ENCODE measurements at regions of chr9 and their contacts with region 1.

Region 1: DNA sequence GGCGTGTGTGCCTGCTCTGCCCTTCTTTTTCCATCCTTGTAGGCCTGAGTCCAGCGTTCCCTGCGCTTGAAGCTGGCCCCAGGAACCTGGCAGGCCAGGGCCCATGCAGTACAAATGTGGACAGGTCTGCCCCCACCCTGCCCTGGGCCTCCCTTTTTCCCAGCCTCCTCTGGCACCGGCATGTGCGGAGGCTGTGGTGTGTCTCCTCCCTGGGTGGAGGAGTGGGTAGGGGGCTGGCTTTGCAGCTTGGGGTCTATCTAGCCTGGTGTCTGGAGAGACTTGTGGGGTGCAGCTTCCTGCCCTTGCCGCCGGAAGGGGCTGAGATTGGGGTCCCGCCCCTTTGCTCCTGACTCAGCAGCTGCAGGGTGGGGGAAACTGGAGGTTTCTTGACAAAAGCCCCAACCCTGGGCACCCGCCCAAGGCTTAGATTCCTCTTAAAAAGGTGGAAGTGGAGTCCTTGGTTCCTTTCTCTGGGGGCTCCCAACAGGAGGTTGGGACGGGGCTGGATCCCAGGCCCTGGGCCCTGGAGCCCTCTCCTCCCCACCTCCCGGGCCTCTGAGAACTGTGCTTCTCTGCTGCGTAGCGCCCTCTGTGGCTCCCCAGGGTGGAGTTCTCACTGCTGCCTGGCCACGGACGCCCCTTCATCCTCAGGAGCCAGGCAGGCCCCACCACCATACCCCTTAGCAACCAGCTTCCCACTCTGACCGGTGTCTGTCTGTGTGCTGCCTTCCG is 18.0 kb downstream of the RXRA start:
- DNase-seq: no peak
- H3K4me3 ChIP-seq: no peak overlapping the region
- H3K27ac ChIP-seq: no peak overlapping the region
- H3K4me1 ChIP-seq: no peaks in the 10 kb centered on the region; a peak in 1 of 7 replicates
- H3K27me3 ChIP-seq: no peaks in the 10 kb centered on the region
- CTCF ChIP-seq: peak in 2 of 3 experiments; percentile 37 to 51; a peak in 2 of 4 replicates
- EP300 ChIP-seq: no peak
- POLR2A ChIP-seq: no peak
- RAD21 ChIP-seq: peak; percentile 14 to 44; a peak in 3 of 4 replicates

Region 2: GRCh38 chr9:134326724-134327601 is 17.3 kb before region 1 on chr9:
- CTCF ChIA-PET with region 1: interaction called, 17 read pairs
- POLR2A ChIA-PET with region 1: interaction called, 3 read pairs
- DNase-seq: no peak
- H3K4me3 ChIP-seq: peak overlapping the region; percentile 63 to 81 (median 70)
- H3K27ac ChIP-seq: no peak overlapping the region
- H3K4me1 ChIP-seq: peaks cover 0 to 41% (median 23%) of the 10 kb centered on the region in 4 experiments; a peak in 6 of 7 replicates
- H3K27me3 ChIP-seq: peaks cover 0 to 6% (median 2%) of the 10 kb centered on the region in 4 experiments; a peak in 2 of 7 replicates
- CTCF ChIP-seq: no peak
- EP300 ChIP-seq: no peak
- POLR2A ChIP-seq: no peak
- RAD21 ChIP-seq: no peak

Region 3: GRCh38 chr9:134356570-134357504 is 12.6 kb after region 1 on chr9:
- CTCF ChIA-PET with region 1: interaction called, 15 read pairs
- POLR2A ChIA-PET with region 1: no interaction called
- DNase-seq: no peak
- H3K4me3 ChIP-seq: no peak overlapping the region
- H3K27ac ChIP-seq: no peak overlapping the region; the same call in 1 of the 2 replicates
- H3K4me1 ChIP-seq: no peaks in the 10 kb centered on the region; a peak in 1 of 7 replicates
- H3K27me3 ChIP-seq: no peaks in the 10 kb centered on the region
- CTCF ChIP-seq: no peak
- EP300 ChIP-seq: no peak
- POLR2A ChIP-seq: no peak
- RAD21 ChIP-seq: no peak

Region 4: DNA sequence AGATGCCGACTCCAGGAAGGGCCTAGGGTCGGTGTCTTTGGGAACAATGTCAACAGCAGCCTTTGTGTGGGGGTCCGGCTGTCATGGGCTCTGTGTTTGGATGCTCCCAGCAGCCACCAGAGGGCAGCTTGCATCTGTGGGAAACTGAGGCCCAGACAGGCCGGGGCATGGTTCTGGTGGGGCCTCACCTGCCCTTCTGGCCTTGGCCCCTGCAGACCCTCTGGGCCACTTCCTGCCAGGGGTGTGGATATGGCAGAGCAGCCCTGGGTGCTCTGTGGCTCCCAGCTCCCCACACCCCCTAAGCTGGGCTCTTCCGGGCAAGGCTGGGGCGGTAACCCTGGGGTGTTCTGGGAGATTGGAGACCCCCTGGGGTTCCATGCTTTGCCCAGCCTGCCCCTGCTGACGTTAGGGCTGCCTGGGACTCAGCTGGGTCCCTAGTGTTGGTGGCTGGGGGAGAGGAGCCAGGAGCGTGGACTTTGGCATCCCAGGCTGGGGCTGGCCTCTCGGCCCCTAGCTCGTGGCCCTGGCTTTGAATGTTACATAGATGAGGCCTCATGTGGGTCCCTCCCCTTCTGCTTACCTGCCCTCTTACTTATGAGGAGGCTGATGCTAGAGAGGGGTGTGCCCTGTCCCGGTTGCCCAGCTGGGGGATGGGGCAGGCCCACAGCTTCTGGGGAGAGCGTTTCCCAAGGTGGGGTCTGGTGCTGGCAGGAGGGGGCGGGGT is 20.3 kb after region 1 on chr9:
- CTCF ChIA-PET with region 1: interaction called, 11 read pairs
- POLR2A ChIA-PET with region 1: no interaction called
- DNase-seq: no peak
- H3K4me3 ChIP-seq: no peak overlapping the region
- H3K27ac ChIP-seq: no peak overlapping the region
- H3K4me1 ChIP-seq: peaks cover 0 to 3% (median 0%) of the 10 kb centered on the region in 4 experiments; a peak in 1 of 7 replicates
- H3K27me3 ChIP-seq: no peaks in the 10 kb centered on the region
- CTCF ChIP-seq: peak in 1 of 3 experiments; percentile 1; a peak in 1 of 4 replicates
- EP300 ChIP-seq: no peak
- POLR2A ChIP-seq: no peak
- RAD21 ChIP-seq: no peak

Measured in H1 (cell line).